Brain microvascular endothelial cell (primary cell): ENCODE measurements at regions of chr4 and their contacts with region 1.

Region 1: DNA sequence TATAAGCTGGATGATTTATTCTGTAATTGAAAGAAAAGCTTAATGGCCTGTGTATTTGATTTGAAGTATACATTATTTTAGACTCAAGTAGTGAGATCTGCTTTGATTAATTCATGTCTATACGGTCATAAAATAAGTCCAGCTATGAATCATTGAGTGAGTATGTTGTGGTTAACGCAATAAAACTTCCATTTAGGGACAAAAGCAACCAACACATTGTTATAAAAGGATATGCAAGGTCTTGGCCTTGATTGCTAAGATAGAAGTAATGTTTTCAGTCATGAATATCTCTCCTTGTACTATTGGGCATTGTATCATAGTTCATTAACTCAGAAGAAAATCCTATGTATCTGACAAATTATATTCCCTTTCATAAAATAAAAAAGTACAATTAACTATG is 162.1 kb downstream of the EPHA5 start:
- DNase-seq: peak; percentile 62
- H3K4me3 ChIP-seq: no peak overlapping the region
- H3K27ac ChIP-seq: peak overlapping the region; percentile 61
- H3K27me3 ChIP-seq: no peaks in the 10 kb centered on the region
- CTCF ChIP-seq: no peak

Region 2: DNA sequence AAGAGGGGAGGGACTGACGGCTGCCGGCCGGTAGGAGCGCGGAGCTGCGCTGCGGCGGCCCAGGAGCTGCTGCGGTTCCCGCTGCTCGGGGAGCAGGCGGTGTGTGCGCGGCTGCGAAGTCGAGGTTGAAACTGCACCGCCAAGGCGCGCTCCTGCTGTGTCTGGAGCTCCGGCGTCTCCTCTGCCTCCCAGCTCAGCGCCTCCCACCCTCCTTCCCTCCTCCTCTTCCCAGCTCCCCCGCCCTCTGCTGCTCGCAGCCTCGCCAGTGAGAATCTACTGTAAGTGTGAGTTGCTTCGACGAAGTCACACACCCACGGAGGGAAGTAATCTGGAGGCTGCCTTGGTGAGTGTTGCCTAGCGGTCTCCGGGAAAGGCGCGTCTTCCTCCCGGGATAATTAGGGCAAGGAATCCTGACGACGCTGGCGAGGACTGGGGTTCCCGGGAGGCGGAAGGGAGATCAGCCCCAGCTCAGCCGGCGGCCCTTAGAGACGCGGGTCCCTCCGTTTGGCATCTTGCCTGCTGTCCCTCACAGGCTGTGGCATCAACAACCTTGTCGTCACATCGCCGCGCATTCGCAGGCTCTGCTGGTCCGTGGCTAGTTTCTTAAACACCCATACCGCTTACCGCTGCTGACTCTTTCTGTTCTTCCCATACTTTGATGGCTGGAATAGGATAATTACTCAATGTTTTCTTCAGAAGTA is 162.3 kb after region 1 on chr4 and contains the start of gene EPHA5:
- in situ Hi-C with region 1: loop called (anchors 25 kb)
- DNase-seq: peak; percentile 93
- H3K4me3 ChIP-seq: peak within 1 kb of the TSS; percentile 74
- H3K27ac ChIP-seq: peak within 1 kb of the TSS; percentile 62
- H3K27me3 ChIP-seq: no peaks in the 10 kb centered on the region
- CTCF ChIP-seq: peak; percentile 33